SK-N-SH (cell line): ENCODE measurements at regions of chr22 and their contacts with region 1.

Region 1: DNA sequence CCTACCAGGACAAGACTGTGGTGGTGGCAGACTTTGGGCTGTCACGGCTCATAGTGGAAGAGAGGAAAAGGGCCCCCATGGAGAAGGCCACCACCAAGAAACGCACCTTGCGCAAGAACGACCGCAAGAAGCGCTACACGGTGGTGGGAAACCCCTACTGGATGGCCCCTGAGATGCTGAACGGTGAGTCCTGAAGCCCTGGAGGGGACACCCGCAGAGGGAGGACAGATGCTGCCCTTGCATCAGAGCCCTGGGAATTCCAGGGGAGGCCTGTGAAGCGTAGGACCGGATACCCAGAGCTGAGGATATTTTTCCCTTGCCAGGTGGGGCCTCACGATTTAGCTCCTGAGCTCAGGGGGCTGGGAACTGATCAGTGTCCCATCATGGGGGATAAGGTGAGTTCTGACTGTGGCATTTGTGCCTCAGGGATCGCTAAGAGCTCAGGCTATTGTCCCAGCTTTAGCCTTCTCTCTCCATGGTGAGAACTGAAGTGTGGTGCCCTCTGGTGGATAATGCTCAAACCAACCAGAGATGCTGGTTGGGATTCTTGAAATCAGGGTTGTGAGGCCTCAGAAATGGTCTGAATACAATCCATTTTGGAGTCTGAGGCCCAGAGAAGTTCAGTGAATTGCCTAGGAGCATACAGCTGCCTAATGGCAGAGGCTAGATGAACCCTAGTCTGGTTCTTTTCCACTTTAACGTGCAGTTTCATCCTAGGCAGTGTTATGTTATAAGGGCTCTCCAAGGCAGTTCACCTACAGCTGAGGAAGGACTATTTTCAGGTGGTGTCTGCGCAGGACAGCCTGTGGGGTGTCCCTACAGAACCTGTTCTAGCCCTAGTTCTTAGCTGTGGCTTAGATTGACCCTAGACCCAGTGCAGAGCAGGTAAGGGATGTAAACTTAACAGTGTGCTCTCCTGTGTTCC is 19.5 kb downstream of the PIK3IP1 start:
- DNase-seq: peak; percentile 79
- H3K4me3 ChIP-seq: no peak overlapping the region
- H3K27ac ChIP-seq: peak overlapping the region; percentile 17 to 30; a peak in 3 of 4 replicates
- H3K4me1 ChIP-seq: no peaks in the 10 kb centered on the region; a peak in 1 of 4 replicates
- H3K27me3 ChIP-seq: no peaks in the 10 kb centered on the region
- CTCF ChIP-seq: peak; percentile 78
- EP300 ChIP-seq: no peak
- RAD21 ChIP-seq: peak; percentile 87

Region 2: GRCh38 chr22:31107178-31107893 is 165.4 kb before region 1 on chr22 and contains the start of gene SELENOM:
- CTCF ChIA-PET with region 1: interaction called, 14 read pairs
- POLR2A ChIA-PET with region 1: no interaction called
- DNase-seq: peak; percentile 98
- H3K4me3 ChIP-seq: peak within 1 kb of the TSS; percentile 86 to 94
- H3K27ac ChIP-seq: peak within 1 kb of the TSS; percentile 67 to 85
- H3K4me1 ChIP-seq: peaks cover 0 to 13% of the 10 kb centered on the region in 2 experiments; a peak in 1 of 4 replicates
- H3K27me3 ChIP-seq: no peaks in the 10 kb centered on the region
- CTCF ChIP-seq: peak; percentile 98
- EP300 ChIP-seq: no peak
- RAD21 ChIP-seq: peak; percentile 92
- polyA plus RNA-seq, gene SELENOM: 97.1 and 117 TPM in 2 replicates

Region 3: GRCh38 chr22:31218565-31219262 is 54.1 kb before region 1 on chr22:
- CTCF ChIA-PET with region 1: interaction called, 151 read pairs
- POLR2A ChIA-PET with region 1: no interaction called
- DNase-seq: no peak
- H3K4me3 ChIP-seq: no peak overlapping the region
- H3K27ac ChIP-seq: peak overlapping the region in 1 of 2 experiments; percentile 39; a peak in 2 of 4 replicates
- H3K4me1 ChIP-seq: peaks cover 0 to 7% of the 10 kb centered on the region in 2 experiments; a peak in 2 of 4 replicates
- H3K27me3 ChIP-seq: no peaks in the 10 kb centered on the region
- CTCF ChIP-seq: no peak
- EP300 ChIP-seq: no peak
- RAD21 ChIP-seq: no peak

Region 4: GRCh38 chr22:31230871-31231621 is 41.7 kb before region 1 on chr22:
- CTCF ChIA-PET with region 1: interaction called, 26 read pairs
- POLR2A ChIA-PET with region 1: no interaction called
- DNase-seq: peak; percentile 37
- H3K4me3 ChIP-seq: no peak overlapping the region
- H3K27ac ChIP-seq: peak overlapping the region in 1 of 2 experiments; percentile 57; a peak in 2 of 4 replicates
- H3K4me1 ChIP-seq: peaks cover 16 to 22% of the 10 kb centered on the region in 2 experiments; a peak in 2 of 4 replicates
- H3K27me3 ChIP-seq: no peaks in the 10 kb centered on the region
- CTCF ChIP-seq: peak; percentile 75
- EP300 ChIP-seq: no peak
- RAD21 ChIP-seq: peak; percentile 87

Region 5: DNA sequence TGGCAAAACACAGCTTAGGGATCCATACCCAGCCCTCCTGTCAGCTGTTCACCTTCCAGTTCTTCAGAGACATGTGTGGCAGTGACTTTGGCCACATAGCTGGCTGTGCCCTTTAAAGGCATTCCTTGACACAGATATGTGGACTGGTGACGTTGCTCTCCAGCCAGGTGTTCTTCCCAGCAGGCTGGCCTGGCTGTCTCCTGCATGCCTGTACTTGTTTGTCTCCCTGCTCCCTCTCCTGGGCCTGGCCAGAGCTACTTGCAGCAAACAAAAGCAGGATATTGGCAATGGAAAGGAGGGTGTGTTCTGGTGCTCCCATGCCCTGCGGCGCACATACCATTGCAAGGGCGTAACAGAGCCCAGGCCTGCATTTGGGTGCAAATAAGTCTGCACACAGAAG is 18.8 kb before region 1 on chr22:
- CTCF ChIA-PET with region 1: interaction called, 85 read pairs
- POLR2A ChIA-PET with region 1: no interaction called
- DNase-seq: no peak
- H3K4me3 ChIP-seq: no peak overlapping the region
- H3K27ac ChIP-seq: peak overlapping the region in 1 of 2 experiments; percentile 26; a peak in 1 of 4 replicates
- H3K4me1 ChIP-seq: peaks cover 0 to 25% of the 10 kb centered on the region in 2 experiments; a peak in 2 of 4 replicates
- H3K27me3 ChIP-seq: no peaks in the 10 kb centered on the region
- CTCF ChIP-seq: no peak
- EP300 ChIP-seq: no peak
- RAD21 ChIP-seq: no peak

Region 6: DNA sequence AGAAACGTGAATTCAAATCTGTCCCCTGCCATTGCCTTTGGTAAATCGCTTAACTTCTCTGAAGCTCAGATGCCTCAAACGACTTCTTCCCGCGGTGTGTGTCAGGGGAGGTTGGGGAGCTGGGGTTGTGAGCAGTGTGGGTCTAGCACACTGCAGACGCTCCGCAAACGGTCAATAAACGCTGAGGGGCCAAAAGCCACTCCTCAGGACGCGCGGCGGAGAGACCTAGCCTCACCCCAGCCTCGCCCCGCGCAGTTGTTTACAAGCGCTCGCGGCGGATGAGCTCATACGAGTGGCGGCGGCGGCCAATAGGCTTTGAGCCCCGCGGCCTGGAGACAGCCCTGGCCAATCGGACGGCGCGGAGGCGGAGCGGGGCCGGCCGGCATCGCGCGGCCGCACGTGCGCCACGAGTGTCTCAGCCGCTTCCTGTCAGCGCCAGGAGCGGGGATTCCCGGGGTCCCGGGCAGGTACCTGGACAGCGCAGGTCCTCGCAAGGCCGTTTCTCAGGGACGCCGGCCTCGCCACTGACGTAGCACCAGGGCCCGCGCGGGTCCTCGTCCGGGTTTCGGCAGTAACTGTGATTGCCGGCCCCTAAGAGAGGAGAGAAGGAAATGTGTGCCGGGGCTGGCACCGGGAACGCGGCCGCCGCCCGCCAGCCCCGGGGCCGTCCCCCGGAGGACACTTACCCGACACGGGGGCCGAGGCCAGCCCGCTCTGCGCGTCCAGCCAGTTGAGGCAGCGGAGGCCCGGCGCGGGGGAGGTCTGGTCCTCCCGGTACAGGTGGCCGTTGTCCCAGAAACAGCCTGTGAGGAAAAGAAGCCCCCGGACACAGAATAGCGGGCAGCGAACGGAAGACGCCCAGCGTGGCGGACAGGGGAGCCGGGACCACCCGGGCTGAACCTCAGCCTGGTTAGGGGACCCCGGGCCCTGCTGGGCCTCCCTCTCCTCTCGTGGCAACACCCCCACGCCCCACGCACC is 18.0 kb after region 1 on chr22:
- CTCF ChIA-PET with region 1: interaction called, 27 read pairs
- POLR2A ChIA-PET with region 1: interaction called, 4 read pairs
- DNase-seq: peak; percentile 96
- H3K4me3 ChIP-seq: peak overlapping the region; percentile 69 to 74
- H3K27ac ChIP-seq: peak overlapping the region; percentile 51 to 96
- H3K4me1 ChIP-seq: peaks cover 7 to 21% of the 10 kb centered on the region in 2 experiments; a peak in 3 of 4 replicates
- H3K27me3 ChIP-seq: no peaks in the 10 kb centered on the region
- CTCF ChIP-seq: no peak
- EP300 ChIP-seq: peak; percentile 9 to 73; a peak in 3 of 4 replicates
- RAD21 ChIP-seq: no peak

Region 7: GRCh38 chr22:31313366-31314147 is 40.8 kb after region 1 on chr22:
- CTCF ChIA-PET with region 1: interaction called, 14 read pairs
- POLR2A ChIA-PET with region 1: no interaction called
- DNase-seq: peak; percentile 72
- H3K4me3 ChIP-seq: no peak overlapping the region
- H3K27ac ChIP-seq: 0 out of 4 replicates have a peak overlapping the region, but pooled peaks of 1 of the 2 experiments have one; percentile 8
- H3K4me1 ChIP-seq: peaks cover 0 to 2% of the 10 kb centered on the region in 2 experiments; a peak in 1 of 4 replicates
- H3K27me3 ChIP-seq: no peaks in the 10 kb centered on the region
- CTCF ChIP-seq: peak; percentile 93
- EP300 ChIP-seq: no peak
- RAD21 ChIP-seq: peak; percentile 66

Region 8: GRCh38 chr22:31676700-31677099 is 403.9 kb after region 1 on chr22:
- CTCF ChIA-PET with region 1: no interaction called
- POLR2A ChIA-PET with region 1: no interaction called
- DNase-seq: peak; percentile 94
- H3K4me3 ChIP-seq: peak overlapping the region; percentile 47 to 49
- H3K27ac ChIP-seq: peak overlapping the region in 1 of 2 experiments; percentile 29; a peak in 1 of 4 replicates
- H3K4me1 ChIP-seq: peaks cover 2 to 13% of the 10 kb centered on the region in 2 experiments; a peak in 3 of 4 replicates
- H3K27me3 ChIP-seq: no peaks in the 10 kb centered on the region
- CTCF ChIP-seq: no peak
- EP300 ChIP-seq: no peak
- RAD21 ChIP-seq: no peak